ENCODE measurements at regions of chr17 and their contacts with region 1.

Region 1: GRCh38 chr17:43170766-43171585 is at the start of gene NBR1:
- DNase-seq: peak; percentile 97
- H3K4me3 Mint-ChIP-seq: no peak within 1 kb of the TSS
- H3K27ac Mint-ChIP-seq: no peak within 1 kb of the TSS
- H3K4me1 Mint-ChIP-seq: peaks cover 30% of the 10 kb centered on the region
- H3K27me3 Mint-ChIP-seq: no peaks in the 10 kb centered on the region
- total RNA-seq, gene NBR1: 49.1 and 50.8 TPM in 2 replicates

Region 2: GRCh38 chr17:42997984-42998938 is 172.7 kb before region 1 on chr17 and contains the start of gene RPL27:
- intact Hi-C with region 1: loop called (anchors 2 kb)
- DNase-seq: peak; percentile 97
- H3K4me3 Mint-ChIP-seq: peak within 1 kb of the TSS; percentile 93
- H3K27ac Mint-ChIP-seq: peak within 1 kb of the TSS; percentile 97
- H3K4me1 Mint-ChIP-seq: peaks cover 22% of the 10 kb centered on the region
- H3K27me3 Mint-ChIP-seq: no peaks in the 10 kb centered on the region
- total RNA-seq, gene RPL27: 1,137 and 1,172 TPM in 2 replicates

Region 3: GRCh38 chr17:43024407-43025289 is 146.3 kb before region 1 on chr17 and contains the start of gene RND2:
- intact Hi-C with region 1: loop called (anchors 5 kb)
- DNase-seq: peak; percentile 69
- H3K4me3 Mint-ChIP-seq: peak within 1 kb of the TSS; percentile 90
- H3K27ac Mint-ChIP-seq: peak within 1 kb of the TSS; percentile 84
- H3K4me1 Mint-ChIP-seq: peaks cover 16% of the 10 kb centered on the region
- H3K27me3 Mint-ChIP-seq: peaks cover 11% of the 10 kb centered on the region
- total RNA-seq, gene RND2: 0.05 TPM in 1 of 2 replicates, not detected in the other

Region 4: GRCh38 chr17:43125133-43125966 is 45.6 kb before region 1 on chr17 and contains the start of gene BRCA1:
- intact Hi-C with region 1: loop called (anchors 1 kb)
- DNase-seq: peak; percentile 95
- H3K4me3 Mint-ChIP-seq: peak within 1 kb of the TSS; percentile 99
- H3K27ac Mint-ChIP-seq: peak within 1 kb of the TSS; percentile 99
- H3K4me1 Mint-ChIP-seq: peaks cover 24% of the 10 kb centered on the region
- H3K27me3 Mint-ChIP-seq: no peaks in the 10 kb centered on the region
- total RNA-seq, gene BRCA1: 66.4 and 68.3 TPM in 2 replicates

Region 5: GRCh38 chr17:43183921-43184320 is 12.9 kb after region 1 on chr17:
- intact Hi-C with region 1: no loop called
- DNase-seq: no peak
- H3K4me3 Mint-ChIP-seq: no peak overlapping the region
- H3K27ac Mint-ChIP-seq: no peak overlapping the region
- H3K4me1 Mint-ChIP-seq: no peaks in the 10 kb centered on the region
- H3K27me3 Mint-ChIP-seq: no peaks in the 10 kb centered on the region

Region 6: DNA sequence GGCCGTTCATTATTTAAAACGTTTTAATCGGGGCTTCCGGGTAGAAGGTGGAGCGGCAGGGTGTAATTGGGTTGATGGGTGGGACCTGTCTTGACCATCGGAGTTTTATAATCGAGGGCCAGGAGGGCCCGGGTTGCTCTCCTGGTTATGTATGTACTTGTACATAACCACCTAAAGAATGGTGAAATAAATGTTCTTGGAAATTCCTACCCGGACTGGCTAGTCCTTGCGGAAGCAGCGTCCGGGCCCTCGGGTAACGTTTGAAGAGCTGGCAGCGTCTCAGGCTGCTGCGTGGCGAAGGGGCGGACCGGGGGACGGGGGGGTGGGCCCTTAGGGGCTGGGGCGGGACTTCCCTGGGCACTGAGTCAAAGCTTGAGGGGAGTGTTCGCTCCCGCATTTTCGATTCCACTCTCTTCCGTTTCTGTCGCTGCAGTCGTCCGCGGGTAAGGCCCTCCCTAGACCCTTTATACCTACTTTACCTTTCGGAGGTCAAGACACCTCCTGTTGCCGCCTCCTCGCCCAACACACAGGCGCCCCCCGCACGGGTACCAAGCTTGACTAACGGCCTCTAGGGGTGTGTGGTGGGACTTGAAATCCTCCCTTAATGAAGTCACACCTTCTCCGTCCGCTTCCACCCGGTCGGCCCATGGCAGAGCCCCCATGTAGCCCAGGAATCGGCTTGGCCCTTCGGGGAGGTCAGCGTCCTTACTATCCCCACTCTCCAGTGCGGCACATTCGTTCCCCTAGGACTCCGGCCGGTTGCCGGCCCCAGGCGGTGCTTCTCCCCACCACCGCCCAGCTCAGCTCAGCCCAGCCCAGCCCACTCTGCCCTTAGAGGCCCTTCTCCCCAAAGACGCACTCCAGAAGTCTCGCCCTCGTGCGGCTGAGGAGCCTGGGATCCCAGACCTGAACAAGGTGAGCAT is 40.8 kb after region 1 on chr17 and contains the start of gene TMEM106A:
- intact Hi-C with region 1: loop called (anchors 1 kb)
- DNase-seq: peak; percentile 70
- H3K4me3 Mint-ChIP-seq: peak within 1 kb of the TSS; percentile 99
- H3K27ac Mint-ChIP-seq: peak within 1 kb of the TSS; percentile 93
- H3K4me1 Mint-ChIP-seq: peaks cover 29% of the 10 kb centered on the region
- H3K27me3 Mint-ChIP-seq: no peaks in the 10 kb centered on the region
- total RNA-seq, gene TMEM106A: 18.5 and 22.0 TPM in 2 replicates